ENCODE measurements at regions of chr2 and their contacts with region 1.

Region 1: DNA sequence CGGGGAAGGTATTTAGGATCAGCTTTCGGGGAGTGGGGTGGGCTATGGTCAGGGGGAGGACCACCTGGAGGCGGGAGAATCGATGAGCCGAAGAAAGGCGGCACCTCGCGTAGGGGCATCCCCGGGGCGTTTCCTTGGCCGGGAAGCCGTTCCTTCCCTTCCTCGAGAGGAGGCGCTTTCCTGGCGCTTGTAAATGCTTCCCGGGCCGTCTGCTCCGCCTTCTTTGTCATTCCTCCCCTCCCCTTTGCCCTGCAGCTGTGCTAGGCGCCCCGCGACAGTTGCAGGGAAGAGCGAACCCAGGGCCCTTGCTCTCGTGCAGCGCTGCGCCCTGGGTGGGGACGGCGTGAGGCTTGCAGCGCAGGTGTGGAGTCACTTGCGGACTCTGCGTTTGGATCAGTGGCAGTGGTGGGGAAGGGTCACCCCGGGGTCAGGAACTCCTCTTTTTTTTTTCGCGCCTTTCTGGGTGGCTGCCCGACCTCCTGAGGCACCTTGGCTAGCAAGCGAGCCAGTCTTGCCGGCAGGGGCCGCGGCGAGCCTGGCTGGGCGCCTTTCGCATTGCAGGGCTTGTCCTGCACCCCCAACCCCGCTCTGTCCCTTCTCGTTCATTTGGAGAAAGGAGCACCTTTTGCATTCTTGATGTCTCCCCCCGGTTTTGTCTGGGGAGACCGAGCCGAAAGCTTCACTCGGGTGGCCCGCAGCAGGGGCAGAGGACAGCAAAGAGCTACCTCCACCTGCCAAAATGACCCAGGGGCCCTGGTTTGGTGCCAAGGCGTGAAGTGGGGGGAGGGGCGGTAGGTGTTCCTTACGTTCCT is 840 bp downstream of the KCNS3 start:
- DNase-seq: no peak
- H3K4me3 ChIP-seq: peak overlapping the region; percentile 67 to 81 (median 77)
- H3K27ac ChIP-seq: peak overlapping the region; percentile 72 to 82 (median 78)
- H3K4me1 ChIP-seq: peaks cover 10 to 31% (median 29%) of the 10 kb centered on the region in 4 donors
- H3K27me3 ChIP-seq: no peaks in the 10 kb centered on the region
- CTCF ChIP-seq: peak in 1 of 3 experiments; percentile 28
- EP300 ChIP-seq: no peak
- POLR2A ChIP-seq: no peak

Region 2: GRCh38 chr2:17821535-17822444 is 57.5 kb before region 1 on chr2:
- intact Hi-C with region 1: no loop called
- DNase-seq: no peak
- H3K4me3 ChIP-seq: no peak overlapping the region
- H3K27ac ChIP-seq: no peak overlapping the region
- H3K4me1 ChIP-seq: peaks cover 20 to 26% (median 21%) of the 10 kb centered on the region in 4 donors
- H3K27me3 ChIP-seq: no peaks in the 10 kb centered on the region
- CTCF ChIP-seq: no peak
- EP300 ChIP-seq: no peak
- POLR2A ChIP-seq: no peak

Region 3: DNA sequence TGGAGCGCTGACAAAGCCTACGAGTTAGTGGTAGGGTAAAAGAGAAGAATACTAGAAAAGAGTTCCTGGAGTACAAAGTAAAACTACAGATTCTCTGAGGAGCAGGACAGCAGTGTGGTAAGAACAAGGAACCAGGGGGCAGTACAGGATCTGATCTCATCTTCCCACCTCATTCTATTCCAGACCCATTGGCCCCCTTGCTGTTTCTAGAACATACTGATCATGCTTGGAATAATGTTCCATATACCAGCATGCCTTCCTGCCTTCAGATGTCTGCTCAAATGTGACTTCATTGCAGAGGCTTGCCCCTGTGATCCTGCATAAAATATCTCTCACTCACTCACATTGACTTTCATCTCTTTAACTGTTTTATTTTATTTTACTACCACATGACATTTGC is 43.8 kb before region 1 on chr2:
- intact Hi-C with region 1: no loop called
- DNase-seq: no peak
- H3K4me3 ChIP-seq: no peak overlapping the region
- H3K27ac ChIP-seq: no peak overlapping the region
- H3K4me1 ChIP-seq: peaks cover 3 to 7% (median 5%) of the 10 kb centered on the region in 4 donors
- H3K27me3 ChIP-seq: peaks cover 0 to 9% (median under 1%) of the 10 kb centered on the region in 4 donors
- CTCF ChIP-seq: no peak
- EP300 ChIP-seq: no peak
- POLR2A ChIP-seq: no peak

Region 4: DNA sequence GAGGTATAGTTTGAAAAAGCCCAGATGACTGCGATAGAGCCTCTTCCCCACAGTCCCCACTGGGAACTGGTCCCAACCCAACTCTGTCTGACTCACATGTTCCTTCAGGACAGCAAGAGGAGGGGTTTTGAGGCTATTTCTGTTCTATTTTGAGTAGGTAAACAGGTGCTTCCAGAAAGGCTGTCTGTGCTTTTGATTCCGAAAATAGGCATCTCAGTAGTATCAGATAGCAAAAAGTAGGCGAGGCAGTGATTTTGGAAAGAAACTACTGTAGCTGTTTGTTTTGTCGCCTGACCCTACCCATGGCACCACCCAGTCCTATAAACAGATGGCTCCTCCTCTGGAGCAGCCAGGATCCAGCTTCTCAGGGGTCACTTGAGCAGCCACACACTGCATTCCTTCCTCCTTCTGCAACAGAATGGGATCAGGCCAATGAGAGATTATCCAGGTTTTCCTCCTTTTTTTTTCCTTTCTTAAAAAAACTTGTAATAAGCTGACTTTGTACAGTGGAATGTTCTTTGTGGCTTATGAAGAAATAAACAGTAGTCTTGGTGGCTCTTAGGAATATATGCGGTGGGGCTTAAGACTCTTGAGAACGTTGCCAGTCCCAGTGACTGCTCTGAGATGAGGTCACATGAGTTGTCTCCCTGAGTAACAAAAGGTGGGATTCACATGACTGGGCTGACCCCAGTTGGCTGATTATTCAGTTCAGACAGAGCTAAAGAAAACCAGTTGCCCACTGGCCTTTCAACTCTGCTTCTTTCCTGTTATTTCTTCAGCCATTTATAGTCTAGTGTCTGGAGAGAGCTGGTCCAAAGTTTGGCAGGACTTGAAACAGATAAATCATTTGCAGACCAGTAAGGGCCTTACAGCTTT is 97.8 kb after region 1 on chr2:
- intact Hi-C with region 1: loop called (anchors 5 kb)
- DNase-seq: peak; percentile 92
- H3K4me3 ChIP-seq: no peak overlapping the region
- H3K27ac ChIP-seq: peak overlapping the region; percentile 71 to 77 (median 72)
- H3K4me1 ChIP-seq: peaks cover 0 to 25% (median 20%) of the 10 kb centered on the region in 4 donors
- H3K27me3 ChIP-seq: no peaks in the 10 kb centered on the region
- CTCF ChIP-seq: no peak
- EP300 ChIP-seq: no peak
- POLR2A ChIP-seq: no peak

Measured in esophagus muscularis mucosa (tissue), 4 donors.